ENCODE measurements at regions of chr2 and their contacts with region 1.

Region 1: GRCh38 chr2:71876542-71877451 is 270.9 kb downstream of the CYP26B1 start:
- DNase-seq: no peak
- ATAC-seq: no peak
- H3K4me3 ChIP-seq: no peak overlapping the region
- H3K27ac ChIP-seq: no peak overlapping the region
- H3K4me1 ChIP-seq: peaks cover 12% of the 10 kb centered on the region
- H3K27me3 ChIP-seq: peaks cover 8% of the 10 kb centered on the region
- CTCF ChIP-seq: no peak
- POLR2A ChIP-seq: no peak
- RAD21 ChIP-seq: no peak

Region 2: GRCh38 chr2:72137498-72138010 is 260.8 kb after region 1 on chr2:
- CTCF ChIA-PET with region 1: no interaction called
- POLR2A ChIA-PET with region 1: no interaction called
- dilution Hi-C with region 1: no loop called
- in situ Hi-C with region 1: no loop called
- intact Hi-C with region 1: loop called (anchors 1 kb)
- DNase-seq: peak; percentile 18
- ATAC-seq: peak; percentile 95
- H3K4me3 ChIP-seq: no peak overlapping the region
- H3K27ac ChIP-seq: no peak overlapping the region
- H3K4me1 ChIP-seq: no peaks in the 10 kb centered on the region
- H3K27me3 ChIP-seq: peaks cover 29% of the 10 kb centered on the region
- CTCF ChIP-seq: peak; percentile 86
- POLR2A ChIP-seq: no peak
- RAD21 ChIP-seq: peak; percentile 57